ENCODE measurements at regions of chr5 and their contacts with region 1.

Region 1: GRCh38 chr5:131258733-131259132 is 5.1 kb upstream of the CDC42SE2 start:
- DNase-seq: no peak
- H3K4me3 Mint-ChIP-seq: peak overlapping the region; percentile 19
- H3K27ac Mint-ChIP-seq: peak overlapping the region; percentile 77
- H3K4me1 Mint-ChIP-seq: peaks cover 76% of the 10 kb centered on the region
- H3K27me3 Mint-ChIP-seq: no peaks in the 10 kb centered on the region

Region 2: GRCh38 chr5:131156385-131156784 is 102.3 kb before region 1 on chr5:
- CTCF ChIA-PET with region 1: no interaction called
- intact Hi-C with region 1: no loop called
- DNase-seq: no peak
- H3K4me3 Mint-ChIP-seq: no peak overlapping the region
- H3K27ac Mint-ChIP-seq: no peak overlapping the region
- H3K4me1 Mint-ChIP-seq: peaks cover 26% of the 10 kb centered on the region
- H3K27me3 Mint-ChIP-seq: no peaks in the 10 kb centered on the region

Region 3: DNA sequence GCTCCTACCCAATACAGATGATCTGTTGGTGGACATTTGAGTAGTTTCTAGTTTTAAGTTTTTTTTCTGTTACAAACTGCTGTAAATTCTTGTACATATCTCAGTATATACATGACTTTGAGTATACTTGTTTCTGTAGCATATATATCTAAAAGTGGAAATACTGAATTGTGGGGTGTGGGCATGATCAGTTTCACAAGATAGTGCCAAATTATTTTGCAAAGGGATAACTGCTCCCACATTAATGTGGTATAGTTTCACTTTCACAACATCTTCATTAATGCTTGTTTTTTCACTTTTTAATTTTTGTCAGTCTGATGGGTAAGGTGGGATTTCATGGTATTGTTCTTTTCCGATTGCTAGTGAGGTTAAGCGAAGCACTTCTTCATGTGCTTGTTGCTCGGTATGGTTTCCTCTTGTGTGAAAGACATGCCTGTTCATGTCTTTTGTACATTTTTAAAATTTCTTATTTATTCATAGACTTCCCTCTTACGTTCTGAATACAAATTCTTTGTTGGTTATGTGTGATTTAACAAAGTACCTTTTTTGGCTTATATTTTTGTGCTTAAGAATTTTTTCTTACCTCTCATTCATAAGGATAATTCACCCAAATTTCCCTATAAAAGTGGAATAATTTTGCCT is 108.6 kb after region 1 on chr5:
- CTCF ChIA-PET with region 1: no interaction called
- intact Hi-C with region 1: no loop called
- DNase-seq: no peak
- H3K4me3 Mint-ChIP-seq: no peak overlapping the region
- H3K27ac Mint-ChIP-seq: peak overlapping the region; percentile 84
- H3K4me1 Mint-ChIP-seq: peaks cover 85% of the 10 kb centered on the region
- H3K27me3 Mint-ChIP-seq: no peaks in the 10 kb centered on the region

Region 4: DNA sequence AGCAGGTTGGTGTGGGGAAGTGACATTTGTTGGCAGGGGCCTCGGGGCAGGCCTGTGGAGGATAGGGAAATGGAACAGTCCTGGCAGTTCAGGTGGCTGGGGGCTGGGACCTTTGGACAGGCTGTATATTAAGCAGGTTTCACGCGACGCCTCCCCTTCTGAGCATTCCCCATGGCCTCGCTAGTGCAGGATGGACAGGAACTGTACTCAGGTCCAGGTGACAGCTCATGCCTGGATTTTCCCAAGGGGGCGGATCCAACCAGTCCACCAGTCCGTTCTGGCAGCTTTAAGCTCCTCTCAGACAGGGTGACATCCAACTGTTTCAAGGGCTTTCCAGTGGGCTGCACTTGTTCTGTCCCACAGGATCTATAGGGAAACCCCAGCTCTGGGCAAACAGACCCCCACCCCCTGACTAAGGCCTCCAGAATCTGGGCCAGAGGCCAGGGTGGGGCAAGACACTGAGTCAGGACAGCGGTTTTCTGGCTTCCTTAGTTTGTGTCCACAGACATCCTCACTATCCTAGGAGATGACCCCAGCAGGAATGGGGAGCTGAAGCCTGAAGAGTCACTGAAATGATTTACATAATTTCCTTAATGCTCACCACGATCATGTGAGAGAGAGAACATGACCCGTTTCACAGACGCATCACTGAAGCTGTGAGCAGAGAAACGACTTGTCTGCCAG is 835.8 kb after region 1 on chr5:
- CTCF ChIA-PET with region 1: no interaction called
- intact Hi-C with region 1: loop called (anchors 5 kb)
- DNase-seq: peak; percentile 37
- H3K4me3 Mint-ChIP-seq: no peak overlapping the region
- H3K27ac Mint-ChIP-seq: no peak overlapping the region
- H3K4me1 Mint-ChIP-seq: peaks cover 33% of the 10 kb centered on the region
- H3K27me3 Mint-ChIP-seq: peaks cover 4% of the 10 kb centered on the region

Measured in activated naive CD4-positive, alpha-beta T cell treated with anti-CD3 and anti-CD28 coated beads for 36 hours (primary cell).